Uterus (tissue), 4 donors: ENCODE measurements at regions of chr12 and their contacts with region 1.

Region 1: DNA sequence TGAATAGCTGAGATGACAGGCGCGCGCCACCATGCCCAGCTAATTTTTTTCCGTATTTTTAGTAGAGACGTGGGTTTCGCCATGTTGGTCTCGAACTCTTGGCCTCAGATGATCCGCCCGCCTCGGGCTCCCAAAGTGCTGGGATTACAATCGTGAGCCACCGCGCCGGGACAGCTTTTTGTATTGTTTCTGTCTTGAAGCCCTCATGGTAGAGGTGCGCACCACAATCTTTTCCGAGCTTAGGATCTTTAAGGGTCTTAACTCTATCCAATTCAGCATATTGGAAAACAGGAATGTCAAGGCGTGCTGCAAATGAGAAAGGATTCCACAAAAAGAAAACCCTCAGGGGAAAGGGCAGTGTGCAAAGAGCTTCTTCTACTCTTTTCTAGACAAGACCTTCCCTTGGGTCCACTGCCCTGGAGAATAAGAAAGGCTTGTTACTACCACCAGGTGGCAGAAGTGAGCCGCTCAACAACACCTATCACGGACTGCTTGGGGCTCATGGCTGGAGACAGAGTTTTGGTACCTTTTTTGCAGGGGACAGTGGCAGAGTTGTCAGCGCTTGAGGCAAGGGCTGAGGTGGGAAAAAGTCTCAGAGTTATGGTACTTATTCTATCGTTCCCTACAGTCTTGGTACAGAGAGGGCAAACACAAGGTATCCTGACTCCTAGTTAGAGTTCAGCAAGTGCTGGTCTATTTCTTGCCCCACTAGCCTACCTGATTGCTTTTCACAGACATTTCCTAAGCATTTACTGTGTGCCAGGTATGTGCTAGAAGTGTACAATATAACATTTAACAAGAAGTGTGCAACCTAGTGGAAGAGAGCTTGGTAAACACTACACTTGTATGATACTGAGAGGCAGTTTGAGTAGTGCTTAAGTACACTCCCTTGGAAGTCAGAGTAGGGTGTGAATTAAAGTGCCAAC is 16.4 kb upstream of the SP7 start:
- DNase-seq: peak; percentile 83 to 90
- H3K4me3 ChIP-seq: no peak overlapping the region
- H3K27ac ChIP-seq: no peak overlapping the region
- H3K4me1 ChIP-seq: no peaks in the 10 kb centered on the region
- H3K27me3 ChIP-seq: no peaks in the 10 kb centered on the region
- CTCF ChIP-seq: peak; percentile 85 to 94 (median 92)
- POLR2A ChIP-seq: no peak

Region 2: DNA sequence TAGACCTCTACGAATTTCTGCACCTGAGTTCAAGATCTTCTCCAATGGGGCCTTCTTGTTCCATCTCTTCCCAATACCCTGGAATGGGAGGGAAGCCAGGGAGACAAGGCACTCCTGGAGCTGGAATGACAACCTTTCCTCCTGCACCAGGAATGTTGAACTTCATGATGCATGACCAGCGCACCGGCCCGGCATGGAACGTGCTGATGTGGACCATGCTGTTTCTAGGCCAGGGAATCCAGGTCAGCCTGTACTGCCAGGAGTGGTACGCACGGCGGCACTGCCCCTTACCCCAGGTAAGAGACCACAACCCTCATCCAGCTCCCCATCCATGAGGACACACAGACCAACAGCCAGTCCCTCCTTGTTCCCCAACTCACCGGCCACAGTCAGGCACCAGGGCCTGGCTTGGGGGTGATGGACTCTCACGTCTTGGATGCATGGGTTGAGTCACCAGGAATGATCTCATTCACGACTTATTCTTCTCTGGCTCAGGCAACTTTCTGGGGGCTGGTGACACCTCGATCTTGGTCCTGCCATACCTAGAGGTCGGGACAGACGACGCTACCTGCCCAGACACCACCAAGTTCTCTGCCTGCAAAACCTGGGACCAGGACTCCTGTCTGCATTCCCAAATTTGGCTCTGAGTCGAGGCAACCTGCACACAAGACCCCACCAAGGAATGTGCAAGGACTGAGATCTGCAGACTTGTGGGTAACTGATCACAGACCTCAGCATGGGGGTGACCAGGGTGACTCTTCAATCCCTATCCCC is 228.8 kb before region 1 on chr12:
- intact Hi-C with region 1: no loop called
- DNase-seq: no peak
- H3K4me3 ChIP-seq: no peak overlapping the region
- H3K27ac ChIP-seq: no peak overlapping the region
- H3K4me1 ChIP-seq: no peaks in the 10 kb centered on the region
- H3K27me3 ChIP-seq: no peaks in the 10 kb centered on the region
- CTCF ChIP-seq: no peak
- POLR2A ChIP-seq: no peak

Region 3: DNA sequence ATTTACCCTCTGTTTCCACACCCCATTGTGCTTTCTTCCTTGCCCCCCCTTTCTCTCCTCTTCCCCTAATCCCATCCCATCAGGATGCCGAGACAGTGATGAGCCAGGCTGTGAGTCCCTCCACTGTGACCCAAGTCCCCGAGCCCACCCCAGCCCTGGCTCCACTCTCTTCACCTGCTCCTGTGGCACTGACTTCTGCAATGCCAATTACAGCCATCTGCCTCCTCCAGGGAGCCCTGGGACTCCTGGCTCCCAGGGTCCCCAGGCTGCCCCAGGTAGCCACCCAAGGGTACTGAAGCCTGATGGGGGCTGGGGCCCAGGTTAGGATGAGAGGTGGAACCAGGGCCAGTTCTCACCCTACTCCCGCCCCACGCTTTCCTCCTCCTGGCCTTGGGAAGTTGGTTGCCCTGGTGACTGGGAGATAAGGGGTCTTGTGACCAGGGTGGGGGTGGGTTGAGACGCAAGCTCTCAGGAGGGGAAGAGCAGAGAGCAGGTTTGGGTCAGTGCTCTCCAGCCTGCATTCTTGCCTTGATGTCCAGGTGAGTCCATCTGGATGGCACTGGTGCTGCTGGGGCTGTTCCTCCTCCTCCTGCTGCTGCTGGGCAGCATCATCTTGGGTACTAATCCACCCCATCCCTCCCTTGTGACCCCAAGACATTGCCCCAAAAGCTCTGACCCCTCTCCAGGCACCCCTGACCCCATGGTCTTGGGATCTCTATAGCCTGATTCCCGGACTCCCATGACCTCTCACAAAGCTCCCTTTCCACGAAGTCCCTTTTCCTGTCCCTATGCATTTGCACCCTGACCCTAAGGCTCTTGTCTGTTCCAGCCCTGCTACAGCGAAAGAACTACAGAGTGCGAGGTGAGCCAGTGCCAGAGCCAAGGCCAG is 72.3 kb after region 1 on chr12:
- intact Hi-C with region 1: loop called (anchors 5 kb)
- DNase-seq: no peak
- H3K4me3 ChIP-seq: peak overlapping the region in 1 of 2 donors; percentile 18
- H3K27ac ChIP-seq: no peak overlapping the region
- H3K4me1 ChIP-seq: no peaks in the 10 kb centered on the region
- H3K27me3 ChIP-seq: no peaks in the 10 kb centered on the region
- CTCF ChIP-seq: no peak
- POLR2A ChIP-seq: no peak

Region 4: DNA sequence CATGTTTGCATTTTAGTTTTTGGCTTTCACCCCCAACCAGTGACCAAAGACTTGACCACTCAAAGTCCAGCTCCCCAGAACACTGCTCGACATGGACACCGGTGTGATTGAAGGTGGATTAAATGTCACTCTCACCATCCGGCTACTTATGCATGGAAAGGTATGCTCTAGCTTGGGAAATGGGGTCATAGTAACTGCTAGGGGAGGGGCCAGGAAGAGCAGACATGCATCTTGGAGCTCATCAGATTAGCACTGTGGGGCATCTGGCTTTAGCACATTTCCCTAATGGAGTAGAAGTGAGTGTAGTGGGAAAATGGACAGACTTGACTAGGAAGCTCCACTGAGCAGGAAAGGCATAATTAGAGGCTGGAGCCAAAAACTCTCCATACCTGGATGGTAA is 102.1 kb after region 1 on chr12:
- intact Hi-C with region 1: no loop called
- DNase-seq: no peak
- H3K4me3 ChIP-seq: no peak overlapping the region
- H3K27ac ChIP-seq: no peak overlapping the region
- H3K4me1 ChIP-seq: peaks cover 4 to 12% of the 10 kb centered on the region in 2 donors
- H3K27me3 ChIP-seq: no peaks in the 10 kb centered on the region
- CTCF ChIP-seq: no peak
- POLR2A ChIP-seq: no peak

Region 5: GRCh38 chr12:53500776-53501614 is 148.4 kb after region 1 on chr12 and contains the start of gene TARBP2:
- intact Hi-C with region 1: loop called (anchors 2 kb)
- DNase-seq: peak; percentile 99 to 100
- H3K4me3 ChIP-seq: peak within 1 kb of the TSS; percentile 68 to 72
- H3K27ac ChIP-seq: peak within 1 kb of the TSS; percentile 96 to 99
- H3K4me1 ChIP-seq: peaks cover 0 to 19% of the 10 kb centered on the region in 2 donors
- H3K27me3 ChIP-seq: no peaks in the 10 kb centered on the region
- CTCF ChIP-seq: peak in 3 of 4 experiments; percentile 4 to 19 (median 18)
- POLR2A ChIP-seq: peak; percentile 20 to 74
- total RNA-seq, gene TARBP2: 6.7 to 33.2 (median 19.0) TPM

Region 6: GRCh38 chr12:53514628-53515290 is 162.2 kb after region 1 on chr12:
- intact Hi-C with region 1: no loop called
- DNase-seq: no peak
- H3K4me3 ChIP-seq: no peak overlapping the region
- H3K27ac ChIP-seq: no peak overlapping the region
- H3K4me1 ChIP-seq: no peaks in the 10 kb centered on the region
- H3K27me3 ChIP-seq: no peaks in the 10 kb centered on the region
- CTCF ChIP-seq: no peak
- POLR2A ChIP-seq: no peak